ENCODE measurements at regions of chr20 and their contacts with region 1.

Region 1: GRCh38 chr20:2206957-2207769 is 88.6 kb upstream of the TGM3 start:
- DNase-seq: peak; percentile 52
- H3K4me3 ChIP-seq: peak overlapping the region; percentile 55 to 67 (median 57)
- H3K27ac ChIP-seq: no peak overlapping the region
- H3K4me1 ChIP-seq: peaks cover 11% of the 10 kb centered on the region
- H3K27me3 ChIP-seq: peaks cover 3% of the 10 kb centered on the region
- CTCF ChIP-seq: peak; percentile 65 to 92

Region 2: GRCh38 chr20:2349818-2350508 is 142.8 kb after region 1 on chr20:
- CTCF ChIA-PET with region 1: no interaction called
- dilution Hi-C with region 1: no loop called
- in situ Hi-C with region 1: no loop called
- intact Hi-C with region 1: loop called (anchors 1 kb)
- DNase-seq: peak; percentile 58
- H3K4me3 ChIP-seq: no peak overlapping the region
- H3K27ac ChIP-seq: no peak overlapping the region
- H3K4me1 ChIP-seq: peaks cover 9% of the 10 kb centered on the region
- H3K27me3 ChIP-seq: no peaks in the 10 kb centered on the region
- CTCF ChIP-seq: peak in 1 of 2 donors; percentile 1

Region 3: GRCh38 chr20:2402271-2402980 is 195.3 kb after region 1 on chr20:
- CTCF ChIA-PET with region 1: interaction called, 3 read pairs
- dilution Hi-C with region 1: no loop called
- in situ Hi-C with region 1: no loop called
- intact Hi-C with region 1: loop called (anchors 1 kb)
- DNase-seq: peak; percentile 68
- H3K4me3 ChIP-seq: no peak overlapping the region
- H3K27ac ChIP-seq: no peak overlapping the region
- H3K4me1 ChIP-seq: no peaks in the 10 kb centered on the region
- H3K27me3 ChIP-seq: no peaks in the 10 kb centered on the region
- CTCF ChIP-seq: peak; percentile 51 to 61

Measured in mammary epithelial cell (primary cell).